H1 (cell line): ENCODE measurements at regions of chr6 and their contacts with region 1.

Region 1: GRCh38 chr6:154928325-154928922 is 66.7 kb upstream of the TIAM2 start:
- DNase-seq: peak in 1 of 2 experiments; percentile 77
- H3K4me3 ChIP-seq: no peak overlapping the region
- H3K27ac ChIP-seq: no peak overlapping the region
- H3K4me1 ChIP-seq: peaks cover 5 to 17% (median 7%) of the 10 kb centered on the region in 4 experiments
- H3K27me3 ChIP-seq: no peaks in the 10 kb centered on the region
- CTCF ChIP-seq: peak; percentile 1 to 87 (median 79)
- EP300 ChIP-seq: no peak
- POLR2A ChIP-seq: no peak
- RAD21 ChIP-seq: peak; percentile 97 to 98

Region 2: GRCh38 chr6:154868143-154868594 is 60.3 kb before region 1 on chr6:
- CTCF ChIA-PET with region 1: interaction called, 31 read pairs
- POLR2A ChIA-PET with region 1: interaction called, 3 read pairs
- DNase-seq: no peak
- H3K4me3 ChIP-seq: no peak overlapping the region
- H3K27ac ChIP-seq: no peak overlapping the region
- H3K4me1 ChIP-seq: peaks cover 0 to 7% (median 5%) of the 10 kb centered on the region in 4 experiments; a peak in 3 of 7 replicates
- H3K27me3 ChIP-seq: no peaks in the 10 kb centered on the region
- CTCF ChIP-seq: peak in 2 of 3 experiments; percentile 56 to 69; a peak in 2 of 4 replicates
- EP300 ChIP-seq: no peak
- POLR2A ChIP-seq: no peak
- RAD21 ChIP-seq: peak; percentile 83 to 89

Region 3: GRCh38 chr6:154914288-154914687 is 14.1 kb before region 1 on chr6:
- CTCF ChIA-PET with region 1: interaction called, 34 read pairs
- POLR2A ChIA-PET with region 1: no interaction called
- DNase-seq: no peak
- H3K4me3 ChIP-seq: no peak overlapping the region
- H3K27ac ChIP-seq: no peak overlapping the region
- H3K4me1 ChIP-seq: peaks cover 0 to 5% (median 3%) of the 10 kb centered on the region in 4 experiments; a peak in 4 of 7 replicates
- H3K27me3 ChIP-seq: no peaks in the 10 kb centered on the region
- CTCF ChIP-seq: no peak
- EP300 ChIP-seq: no peak
- POLR2A ChIP-seq: no peak
- RAD21 ChIP-seq: no peak

Region 4: DNA sequence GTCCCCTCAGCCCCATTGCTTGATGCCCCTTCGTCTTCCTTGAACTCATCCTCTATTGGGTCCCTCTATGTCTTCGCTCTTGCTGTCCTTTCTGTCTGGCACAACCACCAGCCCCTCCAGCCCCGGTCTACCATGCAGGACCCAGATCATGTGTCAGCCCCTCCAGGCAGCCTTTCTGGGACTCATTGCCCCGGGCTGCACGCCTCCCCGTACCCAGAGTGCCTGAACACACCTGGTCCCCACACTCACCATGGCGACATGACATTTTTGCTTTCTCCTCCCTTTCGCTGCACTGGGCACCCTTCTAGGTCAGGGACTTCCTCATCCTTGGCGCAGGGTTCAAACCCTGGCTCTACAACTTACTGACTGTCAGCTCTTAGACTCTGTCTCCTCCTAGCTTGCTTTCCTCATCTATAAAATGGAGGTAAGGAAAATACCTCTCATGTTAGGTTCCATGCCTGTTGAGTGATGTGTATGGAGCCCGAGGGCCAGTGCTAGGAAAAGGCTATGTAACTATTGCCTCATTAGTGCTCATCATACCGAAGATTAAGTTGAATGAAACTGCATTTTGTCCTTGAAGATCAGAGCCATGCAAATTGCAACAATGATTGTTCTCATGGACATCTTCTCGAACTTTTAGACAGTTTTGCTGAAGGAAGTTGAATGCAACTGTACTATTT is 16.9 kb after region 1 on chr6:
- CTCF ChIA-PET with region 1: interaction called, 14 read pairs
- POLR2A ChIA-PET with region 1: interaction called, 3 read pairs
- DNase-seq: no peak
- H3K4me3 ChIP-seq: no peak overlapping the region
- H3K27ac ChIP-seq: no peak overlapping the region
- H3K4me1 ChIP-seq: no peaks in the 10 kb centered on the region
- H3K27me3 ChIP-seq: no peaks in the 10 kb centered on the region
- CTCF ChIP-seq: no peak
- EP300 ChIP-seq: no peak
- POLR2A ChIP-seq: no peak
- RAD21 ChIP-seq: no peak

Region 5: GRCh38 chr6:154962753-154963152 is 34.3 kb after region 1 on chr6:
- CTCF ChIA-PET with region 1: interaction called, 36 read pairs
- POLR2A ChIA-PET with region 1: no interaction called
- DNase-seq: no peak
- H3K4me3 ChIP-seq: no peak overlapping the region
- H3K27ac ChIP-seq: no peak overlapping the region
- H3K4me1 ChIP-seq: peaks cover 0 to 2% (median 0%) of the 10 kb centered on the region in 4 experiments; a peak in 1 of 7 replicates
- H3K27me3 ChIP-seq: no peaks in the 10 kb centered on the region
- CTCF ChIP-seq: no peak
- EP300 ChIP-seq: no peak
- POLR2A ChIP-seq: no peak
- RAD21 ChIP-seq: no peak

Region 6: GRCh38 chr6:154981079-154981870 is 52.9 kb after region 1 on chr6:
- CTCF ChIA-PET with region 1: interaction called, 11 read pairs
- POLR2A ChIA-PET with region 1: no interaction called
- DNase-seq: no peak
- H3K4me3 ChIP-seq: no peak overlapping the region
- H3K27ac ChIP-seq: no peak overlapping the region
- H3K4me1 ChIP-seq: no peaks in the 10 kb centered on the region
- H3K27me3 ChIP-seq: no peaks in the 10 kb centered on the region
- CTCF ChIP-seq: no peak
- EP300 ChIP-seq: no peak
- POLR2A ChIP-seq: no peak
- RAD21 ChIP-seq: no peak